AG04450 (cell line): ENCODE measurements at regions of chr18 and their contacts with region 1.

Region 1: DNA sequence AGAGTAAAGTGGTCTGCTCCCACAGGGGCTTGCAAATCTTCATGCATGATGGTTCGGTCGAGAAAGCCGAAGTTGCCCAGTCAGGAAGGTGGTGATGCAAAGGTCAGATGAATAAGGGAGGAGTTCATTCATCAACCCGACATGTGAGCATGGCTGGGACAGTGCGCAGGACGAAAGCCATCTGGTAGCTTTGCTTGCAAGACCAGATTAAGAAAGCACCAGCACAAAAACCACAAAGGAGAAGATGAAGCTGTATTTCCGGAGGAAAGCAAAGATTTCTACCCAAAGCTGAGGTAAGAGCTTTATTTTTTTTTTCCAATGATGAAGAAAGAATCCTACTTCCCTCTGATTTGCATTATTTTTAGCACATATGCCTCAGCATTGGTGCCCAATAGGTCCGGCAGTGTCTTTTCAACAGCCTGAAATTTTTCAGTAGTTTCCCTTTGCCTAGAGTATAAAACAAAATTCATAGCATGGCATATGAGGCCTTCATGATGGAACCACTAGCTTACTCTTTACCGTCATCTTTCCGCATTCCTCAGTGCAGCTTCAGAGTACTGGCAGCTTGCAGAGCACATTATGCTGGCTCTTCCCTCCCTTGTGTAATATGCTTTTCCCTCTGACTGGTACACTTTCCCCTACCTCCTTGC is 112.0 kb upstream of the THOC1 start:
- DNase-seq: no peak
- H3K4me3 ChIP-seq: no peak overlapping the region
- H3K27ac ChIP-seq: peak overlapping the region; percentile 25
- H3K27me3 ChIP-seq: no peaks in the 10 kb centered on the region
- CTCF ChIP-seq: no peak

Region 2: GRCh38 chr18:394997-395383 is 15.2 kb after region 1 on chr18:
- CTCF ChIA-PET with region 1: no interaction called
- POLR2A ChIA-PET with region 1: interaction called, 12 read pairs
- DNase-seq: peak; percentile 51
- H3K4me3 ChIP-seq: no peak overlapping the region
- H3K27ac ChIP-seq: peak overlapping the region; percentile 74
- H3K27me3 ChIP-seq: no peaks in the 10 kb centered on the region
- CTCF ChIP-seq: no peak